ENCODE measurements at regions of chr6 and their contacts with region 1.

Region 1: GRCh38 chr6:121319112-121319553 is 15.1 kb downstream of the TBC1D32 start:
- DNase-seq: no peak
- ATAC-seq: no peak

Region 2: DNA sequence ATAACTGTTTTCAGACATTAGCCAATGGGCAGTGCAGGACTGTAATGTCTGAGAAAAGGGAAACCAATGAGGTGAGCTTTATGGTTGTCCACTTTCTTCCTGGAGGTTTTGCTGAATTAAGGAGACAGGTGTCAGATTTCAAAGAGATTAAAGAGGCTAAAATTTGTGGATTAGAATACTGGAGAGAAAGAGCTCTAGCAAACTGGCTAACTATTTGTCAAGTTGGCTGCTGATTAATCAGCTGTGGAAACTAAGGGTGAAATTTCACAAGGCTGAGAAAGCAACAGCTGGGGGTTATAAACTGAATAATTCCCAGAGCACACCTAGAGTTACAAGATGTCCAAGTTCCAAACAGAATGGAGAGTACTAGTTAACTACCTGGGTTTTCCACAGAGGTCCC is 183.7 kb before region 1 on chr6:
- intact Hi-C with region 1: loop called (anchors 10 kb)
- DNase-seq: no peak
- ATAC-seq: no peak

Region 3: DNA sequence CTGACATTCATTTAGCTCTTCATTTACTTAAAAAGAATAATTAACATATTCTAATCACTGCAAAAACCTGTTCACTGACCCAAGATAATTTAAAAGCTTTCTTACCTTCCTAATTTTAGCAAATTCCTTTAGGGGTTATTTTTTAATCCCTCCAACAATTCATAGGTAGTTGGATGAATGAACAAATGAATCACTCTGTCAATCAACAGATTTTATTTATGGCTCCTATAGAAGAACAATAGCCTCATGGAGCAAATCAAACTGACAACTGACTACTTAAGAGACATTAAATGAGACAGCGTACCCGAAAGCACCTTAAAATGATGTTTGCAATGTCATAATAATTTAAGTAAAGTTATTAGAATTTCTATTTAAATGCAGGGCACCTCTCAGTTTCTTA is 84.8 kb after region 1 on chr6:
- intact Hi-C with region 1: loop called (anchors 2 kb)
- DNase-seq: no peak
- ATAC-seq: no peak

Region 4: GRCh38 chr6:122833021-122833491 is 1513.9 kb after region 1 on chr6:
- intact Hi-C with region 1: no loop called
- DNase-seq: no peak
- ATAC-seq: no peak